Astrocyte of the cerebellum (primary cell): ENCODE measurements at regions of chr5 and their contacts with region 1.

Region 1: GRCh38 chr5:56802205-56802604 is 13.1 kb upstream of the MAP3K1 start:
- DNase-seq: no peak
- H3K4me3 ChIP-seq: no peak overlapping the region
- CTCF ChIP-seq: no peak

Region 2: GRCh38 chr5:56696900-56697299 is 105.3 kb before region 1 on chr5:
- in situ Hi-C with region 1: loop called (anchors 5 kb)
- DNase-seq: peak; percentile 22
- H3K4me3 ChIP-seq: no peak overlapping the region
- CTCF ChIP-seq: no peak

Region 3: GRCh38 chr5:56871777-56872176 is 69.6 kb after region 1 on chr5:
- in situ Hi-C with region 1: no loop called
- DNase-seq: no peak
- H3K4me3 ChIP-seq: no peak overlapping the region
- CTCF ChIP-seq: no peak